Endothelial cell of umbilical vein (primary cell): ENCODE measurements at regions of chrX and their contacts with region 1.

Region 1: DNA sequence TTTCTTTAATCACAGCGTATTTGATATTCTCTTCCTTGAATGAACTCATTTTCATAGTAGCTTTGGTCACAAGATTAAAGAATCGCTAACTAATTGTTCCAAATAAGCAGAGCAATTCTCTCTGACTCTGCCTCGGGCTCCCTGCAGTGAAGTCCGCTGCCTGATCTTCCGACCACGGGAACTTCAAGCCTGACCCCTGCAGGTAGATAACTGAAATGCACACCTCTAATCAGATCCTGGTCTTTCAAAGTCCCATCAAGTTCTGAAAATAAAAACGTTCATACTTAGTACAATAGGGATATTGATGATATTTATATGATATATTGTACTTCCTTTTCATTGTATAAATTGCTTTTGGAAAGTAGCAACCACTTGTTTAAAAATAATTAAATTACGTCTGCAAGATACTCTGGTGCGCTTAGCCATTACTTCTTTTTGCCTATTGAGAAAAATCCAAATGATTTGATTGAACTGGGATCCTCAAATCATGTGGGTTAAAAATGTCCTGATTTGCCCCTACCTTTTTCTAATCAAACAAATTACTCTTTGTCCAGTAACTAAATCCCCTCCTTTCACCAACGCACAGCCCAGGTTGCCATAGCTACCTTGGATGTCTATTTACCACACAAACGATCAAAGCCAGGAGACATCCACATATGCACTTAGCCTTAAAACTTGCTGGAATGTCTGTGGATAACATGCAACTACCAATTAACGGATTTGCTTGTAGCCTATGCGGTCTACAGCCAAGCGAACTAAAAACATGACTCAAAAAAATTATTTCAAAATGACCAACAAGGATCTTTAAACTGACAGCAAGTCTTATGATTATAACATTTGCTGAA is 4.2 kb downstream of the MID1 start:
- DNase-seq: peak; percentile 66
- H3K4me3 ChIP-seq: no peak overlapping the region
- H3K27ac ChIP-seq: no peak overlapping the region
- H3K4me1 ChIP-seq: peaks cover 23% of the 10 kb centered on the region
- H3K27me3 ChIP-seq: no peaks in the 10 kb centered on the region
- CTCF ChIP-seq: peak; percentile 53 to 59
- POLR2A ChIP-seq: no peak

Region 2: GRCh38 chrX:9988762-9989161 is 627.4 kb before region 1 on chrX:
- CTCF ChIA-PET with region 1: no interaction called
- POLR2A ChIA-PET with region 1: no interaction called
- dilution Hi-C with region 1: no loop called
- intact Hi-C with region 1: loop called (anchors 10 kb)
- DNase-seq: peak; percentile 35
- H3K4me3 ChIP-seq: no peak overlapping the region
- H3K27ac ChIP-seq: no peak overlapping the region
- H3K4me1 ChIP-seq: no peaks in the 10 kb centered on the region
- H3K27me3 ChIP-seq: no peaks in the 10 kb centered on the region
- CTCF ChIP-seq: peak; percentile 15 to 34
- POLR2A ChIP-seq: no peak

Region 3: GRCh38 chrX:10326578-10326977 is 289.6 kb before region 1 on chrX:
- CTCF ChIA-PET with region 1: no interaction called
- POLR2A ChIA-PET with region 1: no interaction called
- dilution Hi-C with region 1: no loop called
- intact Hi-C with region 1: loop called (anchors 10 kb)
- DNase-seq: peak; percentile 1
- H3K4me3 ChIP-seq: no peak overlapping the region
- H3K27ac ChIP-seq: no peak overlapping the region
- H3K4me1 ChIP-seq: no peaks in the 10 kb centered on the region
- H3K27me3 ChIP-seq: no peaks in the 10 kb centered on the region
- CTCF ChIP-seq: no peak
- POLR2A ChIP-seq: no peak

Region 4: DNA sequence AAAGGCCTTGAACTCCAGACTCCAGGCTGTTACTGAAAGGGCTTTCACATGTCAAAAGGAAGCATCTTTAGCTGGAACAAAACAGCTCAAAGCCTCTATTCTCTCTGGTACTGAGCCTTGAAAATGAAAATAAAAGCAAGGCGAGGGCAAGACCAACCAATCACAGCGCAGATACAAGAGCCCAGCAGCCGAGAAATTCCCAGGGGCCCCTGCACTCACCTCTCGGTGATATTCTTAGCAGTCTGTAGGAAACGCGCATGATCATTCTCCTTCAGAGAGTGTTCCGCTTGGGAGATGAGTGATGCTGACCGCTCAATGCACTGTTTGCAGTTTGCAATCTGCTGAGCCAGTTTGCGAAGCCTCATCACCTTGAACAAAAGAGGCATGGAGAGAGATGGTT is 133.9 kb before region 1 on chrX:
- CTCF ChIA-PET with region 1: no interaction called
- POLR2A ChIA-PET with region 1: no interaction called
- dilution Hi-C with region 1: no loop called
- intact Hi-C with region 1: loop called (anchors 10 kb)
- DNase-seq: peak; percentile 55
- H3K4me3 ChIP-seq: no peak overlapping the region
- H3K27ac ChIP-seq: peak overlapping the region; percentile 97
- H3K4me1 ChIP-seq: peaks cover 25% of the 10 kb centered on the region
- H3K27me3 ChIP-seq: no peaks in the 10 kb centered on the region
- CTCF ChIP-seq: no peak
- POLR2A ChIP-seq: no peak

Region 5: DNA sequence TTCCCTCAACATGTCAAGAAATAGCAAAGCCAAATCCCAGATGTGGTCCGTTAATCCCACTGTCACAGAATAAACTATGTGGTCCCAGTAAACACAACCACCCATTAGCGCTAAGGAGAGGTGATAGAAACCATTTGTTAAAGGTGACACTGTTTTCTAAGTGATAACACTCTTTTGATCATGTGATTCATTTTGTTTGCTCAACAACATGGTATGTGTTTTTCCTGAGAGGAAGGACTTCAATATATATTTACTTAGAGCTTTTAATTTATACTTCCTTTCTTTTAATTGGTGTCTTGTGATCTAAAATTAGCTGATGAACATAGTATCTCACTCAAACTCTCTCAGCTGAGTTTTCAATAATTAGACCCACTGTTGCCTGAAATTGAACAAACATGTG is 50.8 kb before region 1 on chrX:
- CTCF ChIA-PET with region 1: no interaction called
- POLR2A ChIA-PET with region 1: no interaction called
- dilution Hi-C with region 1: no loop called
- intact Hi-C with region 1: no loop called
- DNase-seq: no peak
- H3K4me3 ChIP-seq: no peak overlapping the region
- H3K27ac ChIP-seq: no peak overlapping the region
- H3K4me1 ChIP-seq: peaks cover 3% of the 10 kb centered on the region
- H3K27me3 ChIP-seq: no peaks in the 10 kb centered on the region
- CTCF ChIP-seq: no peak
- POLR2A ChIP-seq: no peak

Region 6: GRCh38 chrX:10579112-10580011 is 36.8 kb before region 1 on chrX:
- CTCF ChIA-PET with region 1: interaction called, 5 read pairs
- POLR2A ChIA-PET with region 1: interaction called, 3 read pairs
- dilution Hi-C with region 1: no loop called
- intact Hi-C with region 1: loop called (anchors 2 kb)
- DNase-seq: peak; percentile 84
- H3K4me3 ChIP-seq: peak overlapping the region in 1 of 3 experiments; percentile 59
- H3K27ac ChIP-seq: peak overlapping the region; percentile 99
- H3K4me1 ChIP-seq: peaks cover 58% of the 10 kb centered on the region
- H3K27me3 ChIP-seq: no peaks in the 10 kb centered on the region
- CTCF ChIP-seq: no peak
- POLR2A ChIP-seq: no peak

Region 7: DNA sequence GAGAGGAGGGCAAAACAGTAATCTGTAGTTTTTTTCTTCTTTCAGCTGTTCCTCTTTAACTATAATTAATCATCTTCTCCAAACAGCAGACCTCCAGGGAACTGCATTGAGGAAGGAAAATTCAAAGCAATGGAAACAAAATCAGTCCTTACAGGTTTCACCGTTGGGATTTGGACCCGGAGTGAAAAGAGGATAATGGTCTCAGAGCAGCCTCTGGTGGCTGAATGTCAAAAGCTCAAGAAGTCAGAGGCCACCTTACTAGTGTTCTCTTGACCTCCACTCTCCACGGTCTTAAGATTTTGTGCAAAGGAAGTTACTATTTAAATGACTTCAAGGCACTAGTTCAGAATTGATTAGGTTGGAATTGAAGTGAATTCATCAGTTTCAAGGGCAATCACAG is 20.2 kb after region 1 on chrX:
- CTCF ChIA-PET with region 1: interaction called, 17 read pairs
- POLR2A ChIA-PET with region 1: no interaction called
- dilution Hi-C with region 1: no loop called
- intact Hi-C with region 1: loop called (anchors 1 kb)
- DNase-seq: peak; percentile 73
- H3K4me3 ChIP-seq: no peak overlapping the region
- H3K27ac ChIP-seq: no peak overlapping the region
- H3K4me1 ChIP-seq: peaks cover 10% of the 10 kb centered on the region
- H3K27me3 ChIP-seq: no peaks in the 10 kb centered on the region
- CTCF ChIP-seq: peak; percentile 43 to 65
- POLR2A ChIP-seq: no peak

Region 8: DNA sequence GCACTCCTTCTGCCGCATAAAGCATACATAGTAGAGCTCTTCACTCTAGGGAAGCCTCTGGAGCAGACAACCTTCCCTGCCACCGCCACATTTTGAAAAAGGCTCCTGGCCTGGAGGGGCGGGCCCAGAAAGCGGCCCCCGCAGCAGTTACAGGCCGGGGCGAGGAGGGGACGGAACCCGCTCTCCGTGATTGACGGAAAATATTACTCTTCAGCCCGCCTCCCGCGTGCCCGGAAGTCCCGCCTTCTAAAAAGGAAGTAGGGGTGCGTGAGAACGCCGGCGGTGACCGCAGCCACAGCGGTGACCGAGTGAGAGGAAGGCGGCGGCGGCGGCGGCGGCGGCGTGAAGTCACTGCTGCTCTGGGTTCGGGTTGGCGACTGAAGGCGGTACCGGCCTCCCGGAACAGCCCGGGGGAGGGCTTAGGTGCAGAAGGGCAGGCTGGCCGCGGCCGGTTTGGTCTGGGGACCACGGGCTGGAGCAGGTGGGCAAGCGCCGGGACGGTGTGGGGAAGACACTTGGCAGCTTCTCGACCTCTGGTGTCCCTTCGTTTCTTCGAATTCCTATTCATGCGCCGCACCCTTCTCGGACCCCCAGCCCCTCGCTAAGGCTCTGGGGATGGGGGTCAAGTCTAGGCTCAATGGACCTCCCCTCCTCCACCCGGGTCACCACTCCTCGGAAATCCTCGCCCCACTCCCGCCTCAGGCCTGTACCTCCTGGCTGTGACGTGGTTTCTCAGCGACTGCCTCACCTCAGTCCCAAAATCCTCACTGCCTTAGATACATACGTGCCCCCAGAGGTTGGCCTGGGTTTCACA is 495.1 kb after region 1 on chrX and contains the start of gene HCCS:
- CTCF ChIA-PET with region 1: no interaction called
- POLR2A ChIA-PET with region 1: no interaction called
- dilution Hi-C with region 1: no loop called
- intact Hi-C with region 1: loop called (anchors 5 kb)
- DNase-seq: peak; percentile 86
- H3K4me3 ChIP-seq: peak within 1 kb of the TSS; percentile 32 to 97 (median 78)
- H3K27ac ChIP-seq: peak within 1 kb of the TSS; percentile 76
- H3K4me1 ChIP-seq: peaks cover 27% of the 10 kb centered on the region
- H3K27me3 ChIP-seq: no peaks in the 10 kb centered on the region
- CTCF ChIP-seq: no peak
- POLR2A ChIP-seq: no peak
- total RNA-seq, gene HCCS: 35.2 and 39.3 TPM in 2 replicates